Right ventricle myocardium inferior (tissue), 1 donor: ENCODE measurements at regions of chr10 and their contacts with region 1.

Region 1: GRCh38 chr10:3749600-3749999 is 35.4 kb downstream of the KLF6 start:
- DNase-seq: no peak
- ATAC-seq: peak; percentile 80

Region 2: DNA sequence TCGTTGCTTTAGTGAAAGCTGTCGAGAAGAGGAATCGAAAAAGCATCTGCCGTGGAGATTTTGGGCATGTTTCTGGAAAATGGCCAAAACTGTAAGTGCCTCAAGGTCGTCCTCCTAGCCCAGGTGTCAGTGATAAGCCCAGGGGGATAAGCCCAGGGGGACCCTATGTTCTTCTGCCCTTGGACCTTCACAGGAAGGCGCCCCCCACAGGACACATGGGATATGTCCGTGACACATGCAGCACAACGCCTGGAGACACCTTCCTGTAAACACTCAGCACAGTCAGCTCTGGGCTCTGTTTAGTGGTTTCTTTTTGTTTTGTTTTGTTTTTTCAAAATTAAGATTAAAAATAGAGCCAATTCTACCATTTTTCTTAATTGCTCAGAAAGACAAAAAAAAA is 237.3 kb before region 1 on chr10:
- intact Hi-C with region 1: loop called (anchors 5 kb)
- DNase-seq: no peak
- ATAC-seq: no peak

Region 3: DNA sequence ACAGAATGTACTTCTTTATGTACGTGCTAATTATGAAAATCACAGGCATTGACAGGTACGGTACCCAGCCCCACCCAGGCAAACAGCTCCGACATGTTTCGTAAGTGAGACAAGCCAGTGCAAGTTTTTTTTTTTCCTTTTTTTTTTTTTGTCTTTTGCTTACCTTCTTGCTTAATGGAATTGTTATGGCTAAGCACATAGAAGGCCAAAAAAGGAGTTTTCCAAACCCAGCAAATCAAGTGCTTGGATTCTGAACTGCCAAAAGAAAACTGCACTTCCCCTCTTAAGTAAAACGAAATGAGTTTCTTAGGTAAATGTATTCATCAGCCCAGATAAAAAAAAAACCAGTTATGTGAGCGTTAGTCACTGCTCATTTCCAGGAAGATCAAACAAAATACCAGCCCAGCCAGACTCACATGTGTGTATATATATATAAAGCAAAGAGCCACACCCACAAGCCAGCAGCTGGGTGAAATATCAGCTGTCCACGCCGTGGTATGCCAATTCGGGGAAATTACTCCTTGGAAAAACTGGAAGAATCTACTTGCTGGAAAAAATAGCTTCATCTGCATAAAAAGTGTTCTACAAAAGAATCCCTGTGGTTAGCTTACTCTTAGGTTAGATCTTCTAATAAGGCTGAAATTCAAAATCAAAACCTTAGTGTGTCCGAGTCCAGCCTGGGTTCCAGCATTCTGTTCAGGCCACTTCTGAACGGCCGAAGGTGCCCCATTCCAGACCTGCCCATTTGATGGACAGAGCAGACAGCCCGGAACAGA is 27.4 kb after region 1 on chr10:
- intact Hi-C with region 1: loop called (anchors 2 kb)
- DNase-seq: no peak
- ATAC-seq: peak; percentile 15